WTC11 (cell line): ENCODE measurements at regions of chr18 and their contacts with region 1.

Region 1: GRCh38 chr18:3525870-3526420 is 76.0 kb downstream of the TGIF1 start:
- DNase-seq: no peak
- ATAC-seq: peak; percentile 48; the same call in 1 of the 2 replicates
- H3K4me3 Mint-ChIP-seq: no peak overlapping the region
- H3K27ac Mint-ChIP-seq: peak overlapping the region; percentile 98
- H3K4me1 Mint-ChIP-seq: peaks cover 40% of the 10 kb centered on the region
- H3K27me3 Mint-ChIP-seq: peaks cover 3% of the 10 kb centered on the region; the same call in 1 of the 2 replicates
- CTCF ChIP-seq: no peak

Region 2: GRCh38 chr18:3504637-3505036 is 21.3 kb before region 1 on chr18:
- CTCF ChIA-PET with region 1: interaction called, 11 read pairs
- POLR2A ChIA-PET with region 1: interaction called, 3 read pairs
- DNase-seq: no peak
- ATAC-seq: no peak
- H3K4me3 Mint-ChIP-seq: no peak overlapping the region
- H3K27ac Mint-ChIP-seq: 0 out of 2 replicates have a peak overlapping the region, but pooled peaks have one; percentile 4
- H3K4me1 Mint-ChIP-seq: peaks cover 23% of the 10 kb centered on the region
- H3K27me3 Mint-ChIP-seq: no peaks in the 10 kb centered on the region
- CTCF ChIP-seq: no peak

Region 3: DNA sequence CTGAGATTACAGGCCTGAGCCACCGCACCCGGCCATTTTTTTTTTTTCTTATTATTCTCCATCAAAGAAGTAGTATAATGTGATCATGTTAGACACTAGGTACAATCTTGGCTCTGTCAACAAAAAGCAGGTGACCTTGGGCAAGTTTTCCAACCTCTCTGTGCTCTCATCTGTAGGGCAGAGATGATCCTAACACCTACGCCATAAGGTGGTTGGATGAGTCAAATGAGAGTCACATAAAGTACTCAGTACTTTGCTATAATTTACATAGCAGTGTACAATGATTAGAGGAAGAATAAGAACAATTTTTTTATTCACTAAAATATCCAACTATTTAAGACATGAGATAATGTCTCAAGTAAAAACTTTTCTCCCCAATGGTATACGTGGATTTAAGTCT is 52.7 kb after region 1 on chr18:
- CTCF ChIA-PET with region 1: no interaction called
- POLR2A ChIA-PET with region 1: no interaction called
- DNase-seq: no peak
- ATAC-seq: no peak
- H3K4me3 Mint-ChIP-seq: no peak overlapping the region
- H3K27ac Mint-ChIP-seq: no peak overlapping the region
- H3K4me1 Mint-ChIP-seq: peaks cover 47% of the 10 kb centered on the region
- H3K27me3 Mint-ChIP-seq: no peaks in the 10 kb centered on the region
- CTCF ChIP-seq: no peak